ENCODE measurements at regions of chr5 and their contacts with region 1.

Region 1: DNA sequence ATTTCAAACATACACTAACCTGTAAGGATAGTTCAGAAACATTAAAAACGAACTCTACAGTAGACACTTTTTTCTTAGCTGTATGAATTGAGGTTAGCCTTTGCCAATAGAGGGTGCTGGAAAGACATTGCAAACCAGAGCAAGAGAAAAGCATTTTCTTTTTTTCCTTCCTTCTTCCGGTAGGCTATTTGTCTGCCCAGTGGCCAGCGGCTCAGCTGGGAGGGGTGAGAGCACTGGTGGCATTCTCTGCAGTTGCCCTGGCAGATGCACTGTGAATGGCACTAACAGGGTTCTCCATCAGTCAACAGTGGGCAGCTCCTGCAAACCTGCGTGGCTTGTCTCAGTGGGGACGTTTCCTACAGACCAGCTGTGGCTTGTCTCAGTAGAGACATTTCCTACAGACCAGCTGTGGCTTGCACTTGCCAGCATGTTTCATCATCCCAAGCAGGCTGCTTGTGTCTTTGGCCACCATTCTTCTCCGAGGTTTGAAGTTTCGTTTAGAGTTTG is 984.5 kb upstream of the CDH18 start:
- DNase-seq: peak; percentile 68
- H3K4me3 Mint-ChIP-seq: peak overlapping the region; percentile 77
- H3K27ac Mint-ChIP-seq: peak overlapping the region; percentile 36
- H3K4me1 Mint-ChIP-seq: no peaks in the 10 kb centered on the region
- H3K27me3 Mint-ChIP-seq: no peaks in the 10 kb centered on the region
- CTCF ChIP-seq: peak; percentile 45

Region 2: GRCh38 chr5:21263361-21263760 is 290.9 kb after region 1 on chr5:
- CTCF ChIA-PET with region 1: no interaction called
- POLR2A ChIA-PET with region 1: no interaction called
- intact Hi-C with region 1: loop called (anchors 10 kb)
- DNase-seq: no peak
- H3K4me3 Mint-ChIP-seq: no peak overlapping the region
- H3K27ac Mint-ChIP-seq: no peak overlapping the region
- H3K4me1 Mint-ChIP-seq: no peaks in the 10 kb centered on the region
- H3K27me3 Mint-ChIP-seq: no peaks in the 10 kb centered on the region
- CTCF ChIP-seq: no peak

Region 3: DNA sequence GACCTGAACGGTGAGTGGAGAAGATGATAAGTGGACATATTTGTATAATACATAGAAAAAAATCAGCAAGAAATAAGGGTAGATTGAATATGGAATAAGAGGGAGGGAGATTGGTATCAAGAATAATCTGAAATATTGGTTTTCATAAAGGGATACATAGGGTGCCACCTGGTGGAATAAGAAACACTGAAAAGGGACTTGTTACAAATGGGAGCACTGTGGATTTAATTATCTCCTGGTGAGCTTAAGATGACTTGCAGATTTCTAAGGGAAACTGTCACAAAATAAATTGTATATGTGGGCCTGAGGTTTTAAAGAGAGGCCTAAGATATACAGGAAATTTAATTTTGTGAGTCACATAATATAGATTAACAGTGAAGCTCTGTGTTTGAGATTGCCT is 419.0 kb after region 1 on chr5:
- CTCF ChIA-PET with region 1: interaction called, 3 read pairs
- POLR2A ChIA-PET with region 1: no interaction called
- intact Hi-C with region 1: loop called (anchors 1 kb)
- DNase-seq: peak; percentile 49
- H3K4me3 Mint-ChIP-seq: no peak overlapping the region
- H3K27ac Mint-ChIP-seq: no peak overlapping the region
- H3K4me1 Mint-ChIP-seq: peaks cover 6% of the 10 kb centered on the region
- H3K27me3 Mint-ChIP-seq: no peaks in the 10 kb centered on the region
- CTCF ChIP-seq: peak; percentile 15

Region 4: DNA sequence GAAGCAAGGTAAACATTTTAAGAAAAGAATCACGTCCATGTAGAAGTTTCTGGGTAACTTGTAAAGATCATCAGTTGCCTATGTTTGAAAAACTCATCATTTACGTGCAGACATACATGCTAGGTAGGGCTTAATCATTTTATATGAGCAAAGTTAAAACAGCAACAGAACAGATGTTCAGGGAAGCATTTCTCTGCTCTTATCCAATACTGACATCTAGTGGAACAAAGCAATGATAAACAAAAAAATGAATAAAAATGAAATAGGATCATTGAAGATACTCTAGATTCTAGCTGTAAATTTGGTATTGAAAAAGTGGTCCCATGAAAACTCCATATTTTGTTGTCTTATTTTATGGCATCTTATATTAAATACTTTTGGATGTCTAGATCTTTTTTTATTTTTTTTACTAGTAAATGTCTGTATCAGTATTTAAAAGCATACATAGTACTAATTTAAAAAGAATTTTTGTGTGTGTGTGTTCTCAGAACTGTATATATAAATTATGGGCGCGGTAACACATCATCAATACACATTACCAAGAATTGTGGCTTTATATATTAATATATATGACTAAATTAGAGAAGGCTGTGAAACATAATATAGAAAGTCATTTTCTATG is 830.5 kb after region 1 on chr5:
- CTCF ChIA-PET with region 1: interaction called, 5 read pairs
- POLR2A ChIA-PET with region 1: no interaction called
- intact Hi-C with region 1: loop called (anchors 1 kb)
- DNase-seq: peak; percentile 45
- H3K4me3 Mint-ChIP-seq: no peak overlapping the region
- H3K27ac Mint-ChIP-seq: no peak overlapping the region
- H3K4me1 Mint-ChIP-seq: peaks cover 17% of the 10 kb centered on the region
- H3K27me3 Mint-ChIP-seq: no peaks in the 10 kb centered on the region
- CTCF ChIP-seq: peak; percentile 74